Activated CD4-positive, alpha-beta memory T cell treated with anti-CD3 and anti-CD28 coated beads for 36 hours (primary cell): ENCODE measurements at regions of chr7 and their contacts with region 1.

Region 1: DNA sequence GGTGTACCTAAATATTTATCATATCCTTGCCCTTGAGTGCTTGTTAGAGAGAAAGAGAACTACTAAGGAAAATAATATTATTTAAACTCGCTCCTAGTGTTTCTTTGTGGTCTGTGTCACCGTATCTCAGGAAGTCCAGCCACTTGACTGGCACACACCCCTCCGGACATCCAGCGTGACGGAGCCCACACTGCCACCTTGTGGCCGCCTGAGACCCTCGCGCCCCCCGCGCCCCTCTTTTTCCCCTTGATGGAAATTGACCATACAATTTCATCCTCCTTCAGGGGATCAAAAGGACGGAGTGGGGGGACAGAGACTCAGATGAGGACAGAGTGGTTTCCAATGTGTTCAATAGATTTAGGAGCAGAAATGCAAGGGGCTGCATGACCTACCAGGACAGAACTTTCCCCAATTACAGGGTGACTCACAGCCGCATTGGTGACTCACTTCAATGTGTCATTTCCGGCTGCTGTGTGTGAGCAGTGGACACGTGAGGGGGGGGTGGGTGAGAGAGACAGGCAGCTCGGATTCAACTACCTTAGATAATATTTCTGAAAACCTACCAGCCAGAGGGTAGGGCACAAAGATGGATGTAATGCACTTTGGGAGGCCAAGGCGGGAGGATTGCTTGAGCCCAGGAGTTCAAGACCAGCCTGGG is 11.4 kb downstream of the SERPINE1 start:
- DNase-seq: peak; percentile 94
- H3K4me3 Mint-ChIP-seq: peak overlapping the region; percentile 30
- H3K27ac Mint-ChIP-seq: peak overlapping the region; percentile 72
- H3K4me1 Mint-ChIP-seq: peaks cover 47% of the 10 kb centered on the region
- H3K27me3 Mint-ChIP-seq: peaks cover 16% of the 10 kb centered on the region

Region 2: GRCh38 chr7:101126651-101127280 is 11.6 kb before region 1 on chr7 and contains the start of gene SERPINE1:
- CTCF ChIA-PET with region 1: interaction called, 35 read pairs
- POLR2A ChIA-PET with region 1: interaction called, 3 read pairs
- intact Hi-C with region 1: loop called (anchors 2 kb)
- DNase-seq: peak; percentile 63
- H3K4me3 Mint-ChIP-seq: peak within 1 kb of the TSS; percentile 2
- H3K27ac Mint-ChIP-seq: peak within 1 kb of the TSS; percentile 13
- H3K4me1 Mint-ChIP-seq: peaks cover 35% of the 10 kb centered on the region
- H3K27me3 Mint-ChIP-seq: peaks cover 47% of the 10 kb centered on the region
- total RNA-seq, gene SERPINE1: 0.12 TPM in 1 of 2 experiments, not detected in the other

Region 3: GRCh38 chr7:101165075-101165957 is 27.0 kb after region 1 on chr7 and contains the start of gene VGF:
- CTCF ChIA-PET with region 1: interaction called, 24 read pairs
- POLR2A ChIA-PET with region 1: no interaction called
- intact Hi-C with region 1: no loop called
- DNase-seq: peak; percentile 95
- H3K4me3 Mint-ChIP-seq: peak within 1 kb of the TSS; percentile 71
- H3K27ac Mint-ChIP-seq: no peak within 1 kb of the TSS
- H3K4me1 Mint-ChIP-seq: peaks cover 53% of the 10 kb centered on the region
- H3K27me3 Mint-ChIP-seq: peaks cover 60% of the 10 kb centered on the region
- total RNA-seq, gene VGF: not detected

Region 4: DNA sequence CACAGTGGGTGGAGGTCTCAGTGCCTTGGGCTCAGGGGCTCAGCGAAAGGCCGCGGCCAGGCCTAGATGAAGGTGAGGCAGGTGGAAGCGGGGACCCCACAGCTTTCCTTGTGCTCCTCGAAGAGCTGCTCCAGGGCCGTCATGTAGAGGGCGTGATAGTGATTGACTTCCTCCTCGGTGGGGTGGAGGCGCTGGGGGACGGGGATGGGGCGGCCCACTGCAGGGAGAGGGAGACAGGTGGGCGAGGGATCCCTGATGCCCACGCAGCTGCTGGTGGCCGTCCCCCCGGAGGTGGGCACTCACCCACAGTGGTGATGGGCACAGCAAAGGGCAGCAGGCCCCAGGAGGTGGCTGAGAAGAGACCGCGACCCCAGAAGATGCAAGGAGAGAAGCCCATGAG is 57.5 kb after region 1 on chr7:
- CTCF ChIA-PET with region 1: interaction called, 297 read pairs
- POLR2A ChIA-PET with region 1: no interaction called
- intact Hi-C with region 1: no loop called
- DNase-seq: no peak
- H3K4me3 Mint-ChIP-seq: no peak overlapping the region
- H3K27ac Mint-ChIP-seq: no peak overlapping the region
- H3K4me1 Mint-ChIP-seq: peaks cover under 1% of the 10 kb centered on the region
- H3K27me3 Mint-ChIP-seq: peaks cover 10% of the 10 kb centered on the region

Region 5: GRCh38 chr7:101244375-101245146 is 106.2 kb after region 1 on chr7 and contains the start of gene FIS1:
- CTCF ChIA-PET with region 1: interaction called, 37 read pairs
- POLR2A ChIA-PET with region 1: no interaction called
- intact Hi-C with region 1: no loop called
- DNase-seq: peak; percentile 95
- H3K4me3 Mint-ChIP-seq: peak within 1 kb of the TSS; percentile 95
- H3K27ac Mint-ChIP-seq: peak within 1 kb of the TSS; percentile 92
- H3K4me1 Mint-ChIP-seq: peaks cover 22% of the 10 kb centered on the region
- H3K27me3 Mint-ChIP-seq: no peaks in the 10 kb centered on the region
- total RNA-seq, gene FIS1: 96.1 to 98.7 TPM

Region 6: GRCh38 chr7:101287032-101287431 is 148.7 kb after region 1 on chr7:
- CTCF ChIA-PET with region 1: interaction called, 72 read pairs
- POLR2A ChIA-PET with region 1: no interaction called
- intact Hi-C with region 1: loop called (anchors 5 kb)
- DNase-seq: no peak
- H3K4me3 Mint-ChIP-seq: no peak overlapping the region
- H3K27ac Mint-ChIP-seq: no peak overlapping the region
- H3K4me1 Mint-ChIP-seq: peaks cover 20% of the 10 kb centered on the region
- H3K27me3 Mint-ChIP-seq: peaks cover 7% of the 10 kb centered on the region

Region 7: DNA sequence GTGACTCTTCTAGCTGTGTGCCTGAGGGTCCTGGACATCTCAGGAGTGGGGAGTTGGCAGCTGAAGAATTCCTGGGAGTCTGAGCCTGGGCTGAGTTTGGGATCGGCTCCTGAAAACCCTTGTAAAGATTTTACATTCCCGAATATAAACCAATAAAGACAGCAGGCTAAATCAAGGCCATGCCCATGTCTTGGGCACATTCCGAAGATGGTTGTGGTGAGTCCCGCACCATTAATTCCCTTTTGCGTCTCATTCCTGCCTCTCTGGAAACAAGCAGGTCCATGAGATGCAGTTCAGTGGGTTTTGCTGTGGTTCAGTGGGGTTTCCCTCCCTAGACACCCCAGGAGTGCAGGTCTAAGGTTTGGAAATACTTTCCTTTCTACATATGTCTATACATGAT is 315.3 kb after region 1 on chr7:
- CTCF ChIA-PET with region 1: no interaction called
- POLR2A ChIA-PET with region 1: no interaction called
- intact Hi-C with region 1: no loop called
- DNase-seq: no peak
- H3K4me3 Mint-ChIP-seq: no peak overlapping the region
- H3K27ac Mint-ChIP-seq: no peak overlapping the region
- H3K4me1 Mint-ChIP-seq: no peaks in the 10 kb centered on the region
- H3K27me3 Mint-ChIP-seq: no peaks in the 10 kb centered on the region

Region 8: DNA sequence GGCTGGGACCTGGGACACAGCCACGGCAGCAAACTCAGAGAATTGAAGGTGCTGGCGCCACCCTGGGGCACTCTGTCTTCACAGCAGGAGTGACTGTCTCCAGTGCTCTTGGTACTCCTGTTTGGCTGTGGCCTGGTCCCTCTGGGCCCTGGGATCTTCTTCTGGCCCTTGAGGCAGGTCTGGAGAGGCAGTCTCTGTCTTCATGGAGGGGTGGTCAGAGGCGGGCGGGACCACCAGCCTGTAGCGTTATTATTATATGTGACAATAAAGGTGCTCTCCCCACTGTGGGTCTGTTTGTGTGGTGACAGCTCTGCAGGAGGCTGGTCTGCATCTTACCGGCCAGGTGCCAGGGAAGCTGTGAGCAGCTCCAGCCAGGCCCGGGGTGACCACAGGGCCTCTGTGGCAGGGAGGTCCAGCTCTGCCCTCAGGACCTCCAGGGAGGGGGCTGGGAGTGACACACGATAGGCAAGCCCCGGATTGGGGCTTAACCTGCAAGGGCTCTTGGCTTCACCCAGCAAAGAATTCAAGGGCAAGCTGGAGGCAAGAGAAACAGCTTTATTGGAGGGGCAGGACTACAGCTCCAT is 420.5 kb after region 1 on chr7:
- CTCF ChIA-PET with region 1: no interaction called
- POLR2A ChIA-PET with region 1: no interaction called
- intact Hi-C with region 1: no loop called
- DNase-seq: no peak
- H3K4me3 Mint-ChIP-seq: no peak overlapping the region
- H3K27ac Mint-ChIP-seq: no peak overlapping the region
- H3K4me1 Mint-ChIP-seq: no peaks in the 10 kb centered on the region
- H3K27me3 Mint-ChIP-seq: peaks cover 6% of the 10 kb centered on the region